GM10248 (cell line): ENCODE measurements at regions of chr10 and their contacts with region 1.

Region 1: GRCh38 chr10:88835096-88835909 is 16.3 kb downstream of the ANKRD22 start:
- DNase-seq: peak; percentile 55
- CTCF ChIP-seq: peak; percentile 89

Region 2: DNA sequence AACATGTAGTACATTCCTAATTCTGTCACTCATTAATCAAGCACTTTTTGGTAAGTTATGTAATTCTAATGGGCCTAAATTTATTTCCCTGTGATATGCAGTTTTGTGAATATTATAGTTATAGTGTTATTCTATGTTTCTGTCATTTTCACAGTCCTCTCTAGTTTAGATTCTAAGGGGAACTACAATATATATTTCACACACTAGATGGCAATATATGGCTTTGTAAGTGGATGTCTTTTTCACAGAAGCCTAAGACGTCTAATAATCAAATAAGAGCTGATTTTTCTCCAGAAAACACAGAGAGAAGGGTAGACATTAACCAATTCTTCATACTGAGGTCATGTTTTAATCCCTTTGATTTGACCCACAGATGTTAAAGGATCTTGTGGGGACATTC is 270.2 kb before region 1 on chr10:
- CTCF ChIA-PET with region 1: interaction called, 15 read pairs
- POLR2A ChIA-PET with region 1: no interaction called
- DNase-seq: peak; percentile 24
- CTCF ChIP-seq: peak; percentile 40

Region 3: GRCh38 chr10:88793747-88794299 is 41.5 kb before region 1 on chr10:
- CTCF ChIA-PET with region 1: no interaction called
- POLR2A ChIA-PET with region 1: no interaction called
- DNase-seq: peak; percentile 28
- CTCF ChIP-seq: no peak

Region 4: GRCh38 chr10:88820748-88821389 is 14.4 kb before region 1 on chr10:
- CTCF ChIA-PET with region 1: interaction called, 50 read pairs
- POLR2A ChIA-PET with region 1: no interaction called
- DNase-seq: no peak
- CTCF ChIP-seq: no peak

Region 5: GRCh38 chr10:88865281-88865876 is 30.1 kb after region 1 on chr10:
- CTCF ChIA-PET with region 1: interaction called, 49 read pairs
- POLR2A ChIA-PET with region 1: no interaction called
- DNase-seq: no peak
- CTCF ChIP-seq: no peak

Region 6: GRCh38 chr10:88886557-88886956 is 51.3 kb after region 1 on chr10:
- CTCF ChIA-PET with region 1: interaction called, 27 read pairs
- POLR2A ChIA-PET with region 1: no interaction called
- DNase-seq: peak; percentile 38
- CTCF ChIP-seq: no peak

Region 7: DNA sequence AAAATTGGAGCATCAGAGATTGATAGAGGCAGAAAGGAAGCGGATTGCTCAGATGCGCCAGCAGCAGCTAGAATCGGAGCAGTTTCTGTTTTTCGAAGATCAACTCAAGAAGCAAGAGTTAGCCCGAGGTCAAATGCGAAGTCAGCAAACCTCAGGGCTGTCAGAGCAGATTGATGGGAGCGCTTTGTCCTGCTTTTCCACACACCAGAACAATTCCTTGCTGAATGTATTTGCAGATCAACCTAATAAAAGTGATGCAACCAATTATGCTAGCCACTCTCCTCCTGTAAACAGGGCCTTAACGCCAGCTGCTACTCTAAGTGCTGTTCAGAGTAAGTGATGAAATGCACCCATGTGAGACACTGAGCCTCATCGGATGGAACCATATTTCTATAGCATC is 77.8 kb after region 1 on chr10:
- CTCF ChIA-PET with region 1: interaction called, 19 read pairs
- POLR2A ChIA-PET with region 1: no interaction called
- DNase-seq: no peak
- CTCF ChIP-seq: no peak

Region 8: DNA sequence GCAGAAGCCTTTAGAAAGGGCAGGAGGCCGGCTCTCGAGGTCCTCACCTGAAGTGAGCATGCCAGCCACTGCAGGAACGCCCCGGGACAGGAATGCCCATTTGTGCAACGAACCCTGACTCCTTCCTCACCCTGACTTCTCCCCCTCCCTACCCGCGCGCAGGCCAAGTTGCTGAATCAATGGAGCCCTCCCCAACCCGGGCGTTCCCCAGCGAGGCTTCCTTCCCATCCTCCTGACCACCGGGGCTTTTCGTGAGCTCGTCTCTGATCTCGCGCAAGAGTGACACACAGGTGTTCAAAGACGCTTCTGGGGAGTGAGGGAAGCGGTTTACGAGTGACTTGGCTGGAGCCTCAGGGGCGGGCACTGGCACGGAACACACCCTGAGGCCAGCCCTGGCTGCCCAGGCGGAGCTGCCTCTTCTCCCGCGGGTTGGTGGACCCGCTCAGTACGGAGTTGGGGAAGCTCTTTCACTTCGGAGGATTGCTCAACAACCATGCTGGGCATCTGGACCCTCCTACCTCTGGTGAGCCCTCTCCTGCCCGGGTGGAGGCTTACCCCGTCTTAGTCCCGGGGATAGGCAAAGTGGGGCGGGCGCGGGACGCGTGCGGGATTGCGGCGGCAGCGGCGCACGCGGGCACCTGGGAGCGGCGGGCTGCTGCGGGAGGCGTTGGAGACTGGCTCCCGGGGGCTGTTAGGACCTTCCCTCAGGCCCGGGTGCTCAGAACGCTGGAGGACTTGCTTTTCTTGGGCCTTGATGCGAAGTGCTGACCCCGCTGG is 155.3 kb after region 1 on chr10 and contains the start of gene FAS:
- CTCF ChIA-PET with region 1: interaction called, 16 read pairs
- POLR2A ChIA-PET with region 1: interaction called, 3 read pairs
- DNase-seq: peak; percentile 79
- CTCF ChIP-seq: no peak

Region 9: DNA sequence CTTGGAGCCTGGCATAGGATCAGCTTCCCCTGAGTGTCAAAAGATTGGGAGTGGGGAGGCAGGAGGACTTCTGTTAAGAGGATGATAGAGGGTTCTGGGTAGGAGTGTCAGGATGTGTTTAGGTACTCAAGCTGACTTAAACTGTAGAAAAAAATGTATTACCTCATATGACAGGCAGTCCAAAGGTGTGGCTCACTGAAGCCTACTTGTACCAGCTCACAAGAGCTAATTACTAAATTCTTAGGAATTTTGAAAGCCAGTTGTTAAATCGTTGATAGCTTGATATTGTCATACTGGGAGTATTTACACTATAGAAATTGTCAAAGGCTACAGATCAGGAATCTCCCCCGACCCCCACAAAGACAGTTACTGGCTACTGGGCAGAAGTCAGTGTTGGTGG is 187.4 kb after region 1 on chr10:
- CTCF ChIA-PET with region 1: no interaction called
- POLR2A ChIA-PET with region 1: no interaction called
- DNase-seq: no peak
- CTCF ChIP-seq: no peak

Region 10: GRCh38 chr10:89086801-89087521 is 251.7 kb after region 1 on chr10:
- CTCF ChIA-PET with region 1: no interaction called
- POLR2A ChIA-PET with region 1: no interaction called
- DNase-seq: no peak
- CTCF ChIP-seq: no peak